ENCODE measurements at regions of chr1 and their contacts with region 1.

Region 1: GRCh38 chr1:26730695-26731094 is 34.9 kb downstream of the ARID1A start:
- DNase-seq: no peak
- H3K4me3 ChIP-seq: no peak overlapping the region
- H3K27ac ChIP-seq: peak overlapping the region in 1 of 2 experiments; percentile 6
- H3K4me1 ChIP-seq: peaks cover 0 to 17% (median 7%) of the 10 kb centered on the region in 4 experiments
- H3K27me3 ChIP-seq: no peaks in the 10 kb centered on the region

Region 2: DNA sequence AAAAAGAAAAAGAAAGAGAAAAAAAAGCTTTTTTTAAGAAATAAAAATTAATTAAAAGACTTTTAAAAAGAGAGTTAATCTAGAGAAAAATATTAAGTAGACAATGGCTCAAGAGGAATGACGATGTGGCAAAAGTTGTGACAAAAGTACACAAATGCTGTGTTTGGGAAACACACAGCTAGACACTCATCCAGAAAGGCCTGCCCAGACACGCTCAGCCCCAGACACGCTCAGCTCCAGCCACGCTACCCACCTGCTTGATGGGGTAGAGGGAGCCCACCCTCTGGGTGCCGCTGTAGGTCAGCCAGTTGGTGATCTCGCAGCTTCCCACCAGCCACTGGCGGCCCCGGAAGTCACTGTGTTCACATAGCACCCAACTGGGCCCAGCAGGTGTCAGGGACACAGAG is 402.7 kb before region 1 on chr1:
- CTCF ChIA-PET with region 1: no interaction called
- POLR2A ChIA-PET with region 1: no interaction called
- DNase-seq: no peak
- H3K4me3 ChIP-seq: no peak overlapping the region
- H3K27ac ChIP-seq: no peak overlapping the region
- H3K4me1 ChIP-seq: no peaks in the 10 kb centered on the region
- H3K27me3 ChIP-seq: no peaks in the 10 kb centered on the region

Region 3: DNA sequence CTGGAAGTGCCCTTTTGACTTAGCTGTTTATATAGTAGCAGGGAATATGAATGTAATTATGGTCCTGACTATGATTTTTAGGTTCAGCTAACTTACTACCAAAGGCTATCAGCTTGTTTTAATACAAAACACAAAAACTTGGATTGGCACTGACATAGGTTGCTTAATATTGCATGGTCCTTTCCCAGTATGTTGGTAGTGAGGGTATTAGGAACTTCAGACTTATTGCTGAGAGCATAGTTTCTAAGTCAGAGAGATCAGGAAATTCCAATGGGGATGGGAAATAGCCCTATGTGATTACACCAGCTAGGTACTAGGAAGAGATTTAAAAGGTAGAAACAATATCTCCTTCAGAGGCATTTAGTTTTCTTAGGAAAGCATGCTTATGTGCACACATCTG is 27.2 kb before region 1 on chr1:
- CTCF ChIA-PET with region 1: interaction called, 10 read pairs
- POLR2A ChIA-PET with region 1: no interaction called
- DNase-seq: no peak
- H3K4me3 ChIP-seq: no peak overlapping the region
- H3K27ac ChIP-seq: no peak overlapping the region
- H3K4me1 ChIP-seq: peaks cover 66 to 91% (median 86%) of the 10 kb centered on the region in 4 experiments
- H3K27me3 ChIP-seq: no peaks in the 10 kb centered on the region

Region 4: DNA sequence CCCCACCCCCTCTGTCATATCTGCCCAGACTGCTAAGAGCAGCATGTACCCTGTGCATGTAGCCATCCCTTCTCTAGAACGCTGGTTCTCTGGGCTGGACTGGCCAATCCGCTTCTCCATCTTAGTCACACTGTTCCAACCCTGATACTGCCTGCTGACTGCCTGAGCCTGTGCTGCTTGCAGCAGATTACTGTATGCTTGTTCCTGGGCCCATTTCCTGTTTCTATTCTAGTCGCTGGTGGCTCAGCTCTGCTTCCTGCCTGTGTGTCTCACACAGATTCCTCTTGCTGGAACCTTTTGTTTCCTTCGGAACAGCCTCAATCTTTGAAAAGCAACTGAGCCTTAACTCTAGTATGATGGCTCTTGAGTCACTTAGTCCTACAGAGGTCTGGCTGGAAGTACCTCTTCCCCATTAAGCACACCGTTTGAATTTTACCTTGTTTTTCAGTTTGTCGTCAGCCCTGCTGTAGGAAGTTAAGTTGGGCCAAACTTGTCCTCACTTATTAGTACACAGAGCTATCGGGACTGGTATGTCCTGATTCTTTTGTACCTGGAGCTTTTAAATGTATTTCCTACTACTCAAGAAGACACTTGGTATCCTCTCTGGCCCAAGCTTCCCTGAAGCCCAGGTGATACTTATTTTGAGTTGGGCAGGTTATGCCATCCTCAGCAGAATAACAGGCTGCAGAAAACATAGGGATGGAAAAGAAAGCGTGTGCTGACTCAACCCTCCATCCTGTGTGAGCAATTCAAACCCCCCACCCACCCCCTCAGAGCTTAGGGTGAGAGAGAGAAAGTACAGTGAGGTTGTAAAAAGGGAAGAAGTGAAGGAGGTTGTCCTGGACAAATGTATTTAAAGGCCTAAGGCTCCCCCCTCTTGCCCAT is 13.6 kb after region 1 on chr1:
- CTCF ChIA-PET with region 1: interaction called, 26 read pairs
- POLR2A ChIA-PET with region 1: interaction called, 3 read pairs
- DNase-seq: peak; percentile 77 to 94 (median 89)
- H3K4me3 ChIP-seq: peak overlapping the region in 4 of 7 experiments; percentile 9 to 59 (median 44)
- H3K27ac ChIP-seq: peak overlapping the region in 1 of 2 experiments; percentile 67
- H3K4me1 ChIP-seq: peaks cover 28 to 51% (median 45%) of the 10 kb centered on the region in 4 experiments
- H3K27me3 ChIP-seq: no peaks in the 10 kb centered on the region

Region 5: DNA sequence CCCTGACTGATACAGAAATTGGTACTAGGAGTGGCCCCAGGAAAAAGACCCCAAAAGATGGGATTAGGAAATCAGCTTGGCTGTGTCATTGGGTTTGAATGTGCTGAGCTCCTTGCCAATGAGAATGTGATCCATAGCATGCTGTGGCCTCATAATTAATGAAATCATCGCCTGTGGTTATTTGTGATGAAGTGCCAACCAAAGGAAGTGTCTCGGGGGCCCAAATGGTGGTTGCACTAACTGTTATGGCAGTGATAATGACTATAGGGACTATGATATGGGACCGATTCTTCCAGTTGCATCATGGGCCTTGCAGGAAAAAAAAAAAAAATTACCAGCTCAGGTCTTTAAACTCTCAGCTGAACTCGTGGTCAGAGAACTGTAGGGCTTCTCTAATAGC is 80.4 kb after region 1 on chr1:
- CTCF ChIA-PET with region 1: no interaction called
- POLR2A ChIA-PET with region 1: no interaction called
- DNase-seq: peak in 1 of 3 donors; percentile 8
- H3K4me3 ChIP-seq: no peak overlapping the region
- H3K27ac ChIP-seq: no peak overlapping the region
- H3K4me1 ChIP-seq: peaks cover 0 to 4% (median 0%) of the 10 kb centered on the region in 4 experiments
- H3K27me3 ChIP-seq: no peaks in the 10 kb centered on the region

Region 6: GRCh38 chr1:26889551-26890466 is 159.1 kb after region 1 on chr1 and contains the start of gene GPN2:
- CTCF ChIA-PET with region 1: no interaction called
- POLR2A ChIA-PET with region 1: no interaction called
- DNase-seq: peak; percentile 79 to 90 (median 85)
- H3K4me3 ChIP-seq: peak within 1 kb of the TSS; percentile 65 to 96 (median 91)
- H3K27ac ChIP-seq: peak within 1 kb of the TSS; percentile 72 to 89
- H3K4me1 ChIP-seq: peaks cover 3 to 21% (median 18%) of the 10 kb centered on the region in 4 experiments
- H3K27me3 ChIP-seq: no peaks in the 10 kb centered on the region

Region 7: GRCh38 chr1:27102707-27103491 is 372.2 kb after region 1 on chr1:
- CTCF ChIA-PET with region 1: no interaction called
- POLR2A ChIA-PET with region 1: no interaction called
- DNase-seq: peak; percentile 52 to 73 (median 62)
- H3K4me3 ChIP-seq: no peak overlapping the region
- H3K27ac ChIP-seq: no peak overlapping the region
- H3K4me1 ChIP-seq: peaks cover 0 to 35% (median 25%) of the 10 kb centered on the region in 4 experiments
- H3K27me3 ChIP-seq: no peaks in the 10 kb centered on the region

Measured in common myeloid progenitor, CD34-positive (primary cell).